ENCODE measurements at regions of chr3 and their contacts with region 1.

Region 1: GRCh38 chr3:194583604-194584318 is 49.5 kb downstream of the TMEM44 start:
- DNase-seq: peak; percentile 95
- H3K4me3 Mint-ChIP-seq: peak overlapping the region; percentile 98
- H3K27ac Mint-ChIP-seq: peak overlapping the region; percentile 96
- H3K4me1 Mint-ChIP-seq: peaks cover 34% of the 10 kb centered on the region
- H3K27me3 Mint-ChIP-seq: peaks cover 7% of the 10 kb centered on the region

Region 2: GRCh38 chr3:193481436-193481835 is 1102.3 kb before region 1 on chr3:
- intact Hi-C with region 1: no loop called
- DNase-seq: no peak
- H3K4me3 Mint-ChIP-seq: no peak overlapping the region
- H3K27ac Mint-ChIP-seq: no peak overlapping the region
- H3K4me1 Mint-ChIP-seq: no peaks in the 10 kb centered on the region
- H3K27me3 Mint-ChIP-seq: peaks cover 7% of the 10 kb centered on the region

Region 3: GRCh38 chr3:193982258-193982659 is 601.5 kb before region 1 on chr3:
- intact Hi-C with region 1: no loop called
- DNase-seq: no peak
- H3K4me3 Mint-ChIP-seq: no peak overlapping the region
- H3K27ac Mint-ChIP-seq: no peak overlapping the region
- H3K4me1 Mint-ChIP-seq: no peaks in the 10 kb centered on the region
- H3K27me3 Mint-ChIP-seq: peaks cover 40% of the 10 kb centered on the region

Region 4: DNA sequence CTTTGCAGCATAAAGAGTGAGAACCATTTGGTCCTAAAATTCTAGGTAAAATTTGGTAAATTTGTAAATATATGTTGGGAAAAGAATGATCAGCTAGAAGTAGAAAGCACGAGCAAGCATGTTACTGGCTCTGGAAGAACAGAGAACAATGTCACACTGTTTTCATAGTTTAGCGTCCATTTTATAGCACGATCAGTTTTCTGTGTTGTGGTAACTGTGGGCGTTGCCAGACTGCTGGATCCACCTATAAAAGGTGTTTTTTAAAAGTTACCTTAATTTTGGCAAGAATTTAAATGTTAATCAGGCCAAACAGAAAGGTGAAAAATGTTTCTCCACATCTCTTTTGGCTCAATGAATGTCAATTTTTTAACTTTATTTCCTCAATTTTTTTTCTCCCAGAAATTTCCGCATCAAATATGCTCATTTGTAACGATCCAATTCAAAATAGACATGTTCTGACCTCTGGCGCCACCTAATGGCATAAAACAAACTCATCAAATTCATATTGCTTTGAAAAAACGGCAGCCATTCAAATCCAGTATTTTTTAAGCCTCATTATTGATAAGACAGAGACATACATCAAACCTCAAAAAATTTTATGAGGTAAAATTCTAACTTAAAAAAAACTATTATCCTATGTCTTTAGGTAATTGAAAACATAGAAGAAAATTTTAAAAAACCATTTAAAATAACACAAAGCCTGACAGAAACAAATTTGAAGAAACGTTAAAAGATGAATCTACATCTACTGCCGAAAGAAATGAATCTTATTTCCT is 179.2 kb before region 1 on chr3:
- intact Hi-C with region 1: loop called (anchors 1 kb)
- DNase-seq: no peak
- H3K4me3 Mint-ChIP-seq: no peak overlapping the region
- H3K27ac Mint-ChIP-seq: no peak overlapping the region
- H3K4me1 Mint-ChIP-seq: peaks cover 23% of the 10 kb centered on the region
- H3K27me3 Mint-ChIP-seq: peaks cover 2% of the 10 kb centered on the region

Region 5: GRCh38 chr3:194486540-194487288 is 97.0 kb before region 1 on chr3 and contains the start of gene ATP13A3:
- intact Hi-C with region 1: loop called (anchors 1 kb)
- DNase-seq: peak; percentile 87
- H3K4me3 Mint-ChIP-seq: peak within 1 kb of the TSS; percentile 96
- H3K27ac Mint-ChIP-seq: peak within 1 kb of the TSS; percentile 95
- H3K4me1 Mint-ChIP-seq: peaks cover 55% of the 10 kb centered on the region
- H3K27me3 Mint-ChIP-seq: peaks cover 1% of the 10 kb centered on the region
- total RNA-seq, gene ATP13A3: 198 and 206 TPM in 2 replicates

Region 6: GRCh38 chr3:194521514-194522260 is 62.1 kb before region 1 on chr3:
- intact Hi-C with region 1: loop called (anchors 2 kb)
- DNase-seq: no peak
- H3K4me3 Mint-ChIP-seq: no peak overlapping the region
- H3K27ac Mint-ChIP-seq: no peak overlapping the region
- H3K4me1 Mint-ChIP-seq: peaks cover 37% of the 10 kb centered on the region
- H3K27me3 Mint-ChIP-seq: peaks cover 3% of the 10 kb centered on the region

Region 7: GRCh38 chr3:194654443-194654842 is 70.7 kb after region 1 on chr3:
- intact Hi-C with region 1: loop called (anchors 2 kb)
- DNase-seq: no peak
- H3K4me3 Mint-ChIP-seq: peak overlapping the region; percentile 71
- H3K27ac Mint-ChIP-seq: peak overlapping the region; percentile 94
- H3K4me1 Mint-ChIP-seq: peaks cover 34% of the 10 kb centered on the region
- H3K27me3 Mint-ChIP-seq: no peaks in the 10 kb centered on the region

Region 8: GRCh38 chr3:194671900-194672808 is 88.4 kb after region 1 on chr3 and contains the start of gene LSG1:
- intact Hi-C with region 1: loop called (anchors 1 kb)
- DNase-seq: peak; percentile 84
- H3K4me3 Mint-ChIP-seq: peak within 1 kb of the TSS; percentile 99
- H3K27ac Mint-ChIP-seq: peak within 1 kb of the TSS; percentile 97
- H3K4me1 Mint-ChIP-seq: peaks cover 68% of the 10 kb centered on the region
- H3K27me3 Mint-ChIP-seq: peaks cover 3% of the 10 kb centered on the region
- total RNA-seq, gene LSG1: 65.1 and 66.3 TPM in 2 replicates

Region 9: DNA sequence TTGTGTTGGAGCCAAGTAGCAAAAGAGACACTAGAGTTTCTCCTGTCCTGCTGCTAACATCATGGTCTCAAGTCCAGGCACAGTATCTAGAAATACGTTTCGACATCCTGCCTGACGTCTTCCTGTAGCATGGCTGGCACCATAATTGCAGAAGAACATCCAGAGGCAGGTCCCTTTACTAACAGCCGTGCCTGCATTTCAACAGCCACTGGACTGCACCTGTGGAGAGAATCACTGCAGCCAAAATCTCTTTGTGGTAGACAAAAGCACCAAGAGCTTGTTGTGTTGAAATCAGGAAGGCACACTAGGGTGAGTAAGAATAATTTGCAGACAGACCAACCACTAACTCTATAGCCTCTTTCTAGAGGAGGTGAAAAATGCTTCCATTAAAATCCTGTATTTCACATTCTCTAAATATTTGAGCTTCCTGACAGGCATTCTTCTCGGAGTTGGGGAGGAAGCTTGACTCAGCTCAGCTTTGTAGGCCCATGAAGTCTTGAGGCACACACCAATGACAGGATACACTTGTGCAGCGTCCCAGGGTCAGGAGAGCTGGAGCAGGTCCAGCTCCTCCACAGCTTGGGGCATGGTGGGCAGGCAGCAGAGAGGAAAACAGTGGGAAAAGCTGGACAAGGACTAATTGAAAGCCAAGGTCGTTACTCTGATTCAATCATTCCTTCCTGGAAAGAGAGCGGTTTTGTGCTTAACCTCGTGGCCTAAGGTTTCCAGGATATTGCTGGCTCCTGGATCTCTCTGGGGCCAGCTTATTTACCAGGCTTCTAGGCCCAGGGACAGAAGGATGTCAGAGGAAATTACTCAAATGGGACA is 346.8 kb after region 1 on chr3:
- intact Hi-C with region 1: no loop called
- DNase-seq: no peak
- H3K4me3 Mint-ChIP-seq: no peak overlapping the region
- H3K27ac Mint-ChIP-seq: no peak overlapping the region
- H3K4me1 Mint-ChIP-seq: no peaks in the 10 kb centered on the region
- H3K27me3 Mint-ChIP-seq: peaks cover 7% of the 10 kb centered on the region

Region 10: DNA sequence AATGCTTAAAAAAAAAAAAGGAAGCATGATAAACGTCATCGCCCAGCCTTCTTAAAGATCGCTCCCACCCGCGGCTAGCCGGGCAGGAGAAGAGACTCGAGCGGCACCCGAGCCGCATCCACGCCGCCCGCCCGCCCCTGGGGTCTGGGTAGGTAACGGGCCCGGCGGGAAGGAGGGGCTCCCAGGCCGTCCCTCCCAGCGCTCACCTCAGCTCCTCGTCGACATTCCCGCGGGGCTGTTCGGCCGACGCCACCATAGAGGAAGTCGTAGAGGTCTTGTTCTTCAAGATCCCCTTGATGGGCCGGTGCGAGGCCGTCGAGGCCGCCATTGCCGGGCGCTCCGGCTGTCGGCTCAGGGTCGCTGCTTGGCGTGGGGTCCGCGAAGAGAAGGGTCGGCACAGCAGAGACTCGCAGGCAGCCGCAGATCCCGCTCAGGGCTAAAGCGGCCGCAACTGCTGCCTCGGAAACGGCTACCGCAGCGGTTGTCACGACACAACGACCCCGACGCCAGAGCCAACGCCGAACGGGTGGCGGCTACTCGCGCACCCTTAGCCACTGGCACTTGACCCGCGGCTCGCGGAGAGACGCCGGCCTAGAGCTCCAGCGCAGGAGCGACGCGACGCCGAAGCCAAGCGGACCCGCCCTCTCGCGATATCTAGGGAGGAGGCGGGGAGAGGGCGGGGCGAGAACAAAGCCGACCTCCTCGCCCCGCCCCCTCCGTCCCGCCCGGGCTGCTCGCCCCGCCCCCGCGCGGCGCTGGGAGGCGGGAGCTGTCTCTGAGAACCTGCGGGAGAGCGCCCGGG is 959.1 kb after region 1 on chr3 and contains the start of gene PPP1R2:
- intact Hi-C with region 1: loop called (anchors 10 kb)
- DNase-seq: peak; percentile 88
- H3K4me3 Mint-ChIP-seq: peak within 1 kb of the TSS; percentile 88
- H3K27ac Mint-ChIP-seq: peak within 1 kb of the TSS; percentile 82
- H3K4me1 Mint-ChIP-seq: peaks cover 84% of the 10 kb centered on the region
- H3K27me3 Mint-ChIP-seq: no peaks in the 10 kb centered on the region
- total RNA-seq, gene PPP1R2: 98.8 and 106 TPM in 2 replicates